GM12878 (cell line): ENCODE measurements at regions of chr20 and their contacts with region 1.

Region 1: DNA sequence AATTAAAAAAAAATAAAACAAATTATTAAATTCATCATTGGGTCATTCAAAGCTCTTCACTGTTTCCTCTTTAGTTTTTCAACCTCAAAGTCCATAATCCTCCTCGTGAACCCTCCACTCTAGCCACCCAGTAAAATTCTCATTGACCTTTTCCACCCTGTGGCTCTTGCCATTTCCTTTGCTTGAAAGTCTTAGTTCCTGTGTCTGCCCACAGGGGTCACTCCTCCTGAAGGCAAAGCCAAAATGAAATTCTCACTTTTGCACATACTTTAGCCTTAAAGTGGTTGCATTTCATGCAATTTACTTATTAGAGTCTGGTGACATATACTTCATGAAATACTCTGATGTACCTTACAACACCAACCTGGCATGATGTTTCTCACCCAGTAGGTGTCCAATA is 263.7 kb downstream of the BMP2 start:
- DNase-seq: no peak
- ATAC-seq: peak; percentile 62
- H3K4me3 ChIP-seq: no peak overlapping the region
- H3K27ac ChIP-seq: no peak overlapping the region
- H3K4me1 ChIP-seq: no peaks in the 10 kb centered on the region
- H3K27me3 ChIP-seq: no peaks in the 10 kb centered on the region
- CTCF ChIP-seq: peak; percentile 23 to 33 (median 24); a peak in 2 of 6 replicates
- EP300 ChIP-seq: no peak
- POLR2A ChIP-seq: no peak
- RAD21 ChIP-seq: peak; percentile 35

Region 2: GRCh38 chr20:6395695-6396094 is 635.5 kb before region 1 on chr20:
- CTCF ChIA-PET with region 1: no interaction called
- POLR2A ChIA-PET with region 1: no interaction called
- RAD21 ChIA-PET with region 1: no interaction called
- SMC1A ChIA-PET with region 1: no interaction called
- in situ Hi-C with region 1: no loop called
- intact Hi-C with region 1: no loop called
- DNase-seq: no peak
- ATAC-seq: no peak
- H3K4me3 ChIP-seq: no peak overlapping the region
- H3K27ac ChIP-seq: no peak overlapping the region
- H3K4me1 ChIP-seq: no peaks in the 10 kb centered on the region
- H3K27me3 ChIP-seq: no peaks in the 10 kb centered on the region
- CTCF ChIP-seq: no peak
- EP300 ChIP-seq: no peak
- POLR2A ChIP-seq: no peak
- RAD21 ChIP-seq: no peak

Region 3: GRCh38 chr20:7010584-7010983 is 20.6 kb before region 1 on chr20:
- CTCF ChIA-PET with region 1: interaction called, 3 read pairs
- POLR2A ChIA-PET with region 1: interaction called, 3 read pairs
- RAD21 ChIA-PET with region 1: interaction called, 8 read pairs
- SMC1A ChIA-PET with region 1: interaction called, 15 read pairs
- in situ Hi-C with region 1: no loop called
- intact Hi-C with region 1: no loop called
- DNase-seq: no peak
- ATAC-seq: peak; percentile 48
- H3K4me3 ChIP-seq: no peak overlapping the region
- H3K27ac ChIP-seq: no peak overlapping the region
- H3K4me1 ChIP-seq: no peaks in the 10 kb centered on the region
- H3K27me3 ChIP-seq: no peaks in the 10 kb centered on the region
- CTCF ChIP-seq: no peak
- EP300 ChIP-seq: no peak
- POLR2A ChIP-seq: no peak
- RAD21 ChIP-seq: no peak